ENCODE measurements at regions of chr12 and their contacts with region 1.

Region 1: DNA sequence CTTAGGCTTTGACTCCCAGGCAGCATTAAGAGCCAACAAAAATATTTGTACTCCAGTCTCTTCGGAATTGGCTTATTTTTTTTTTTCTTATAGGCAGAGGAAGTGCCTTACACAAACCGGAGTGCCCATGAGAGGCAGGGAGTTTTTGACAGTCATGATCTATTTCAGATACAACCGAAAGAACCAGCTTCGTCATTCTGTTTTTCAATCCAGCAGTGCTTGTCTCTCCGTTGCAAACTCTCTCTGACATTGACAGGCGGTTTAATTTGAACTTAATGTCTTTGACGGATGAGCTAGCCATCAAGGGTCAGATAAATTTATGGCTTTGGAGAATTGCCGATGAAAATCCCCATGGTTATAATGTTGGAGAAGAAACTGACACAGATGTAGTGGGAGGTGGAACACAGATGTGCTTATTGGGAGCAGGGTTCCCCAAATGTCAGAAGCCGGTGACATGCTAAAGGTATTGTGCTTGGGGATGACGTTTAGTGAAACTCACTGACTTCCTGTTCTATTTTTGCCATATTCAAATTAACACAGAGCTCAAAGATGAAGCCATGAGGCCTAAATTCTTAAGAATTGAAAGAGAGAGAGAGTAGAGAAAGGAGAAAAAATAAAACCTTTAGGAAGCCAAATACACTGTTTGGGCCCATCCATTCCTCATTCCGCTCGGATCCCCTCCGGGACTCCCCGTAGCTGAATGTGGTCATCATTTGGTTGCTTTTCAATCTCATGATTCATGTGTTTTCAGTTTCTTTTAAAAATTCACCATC is 59.7 kb downstream of the PLXNC1 start:
- DNase-seq: peak; percentile 62
- ATAC-seq: peak; percentile 80
- H3K4me3 Mint-ChIP-seq: peak overlapping the region; percentile 68
- H3K27ac Mint-ChIP-seq: peak overlapping the region; percentile 99
- H3K4me1 Mint-ChIP-seq: peaks cover 51% of the 10 kb centered on the region
- H3K27me3 Mint-ChIP-seq: no peaks in the 10 kb centered on the region

Region 2: DNA sequence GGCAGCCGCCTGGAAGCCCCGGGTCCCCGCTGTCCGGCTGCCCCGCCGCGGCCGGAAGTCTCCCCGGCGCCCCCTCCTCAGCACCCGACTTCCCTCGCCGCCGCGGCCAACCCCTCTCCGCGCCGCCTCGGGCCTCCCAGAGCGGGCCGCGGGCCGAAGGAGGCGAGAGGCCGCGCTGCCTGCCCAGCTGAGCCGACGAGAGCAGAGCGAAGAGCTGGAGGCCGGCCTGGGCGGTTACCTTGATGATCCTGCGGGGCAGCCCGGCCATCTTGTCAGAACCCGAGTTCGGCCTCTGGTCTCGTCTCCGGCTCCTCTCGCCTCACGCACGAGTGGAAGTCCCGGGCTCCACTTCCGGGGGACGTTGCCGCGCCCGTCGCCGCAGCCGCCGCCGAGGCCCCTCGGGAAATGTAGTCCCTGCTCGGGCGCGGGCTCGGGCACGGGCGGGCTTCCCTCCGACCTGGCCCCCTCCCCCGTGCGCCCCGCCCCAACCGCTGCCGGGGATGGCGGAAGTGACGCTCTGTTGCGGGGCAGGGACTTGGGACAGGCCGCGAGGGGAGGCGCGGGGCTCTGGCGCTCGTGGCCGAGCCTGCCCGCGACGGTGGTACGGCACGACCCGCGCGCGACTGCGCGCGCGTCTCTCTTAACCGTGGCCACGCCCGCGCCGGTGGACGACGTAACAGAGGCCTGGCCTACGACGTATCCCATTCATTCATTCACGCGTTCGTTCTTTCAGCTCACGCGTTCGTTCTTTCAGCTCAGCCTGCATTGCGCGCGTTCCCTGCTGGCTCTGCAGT is 766.2 kb before region 1 on chr12 and contains the start of gene UBE2N:
- CTCF ChIA-PET with region 1: no interaction called
- POLR2A ChIA-PET with region 1: no interaction called
- intact Hi-C with region 1: loop called in 1 of 2 experiments (anchors 10 kb)
- DNase-seq: peak; percentile 98
- ATAC-seq: peak; percentile 84
- H3K4me3 Mint-ChIP-seq: peak within 1 kb of the TSS; percentile 99
- H3K27ac Mint-ChIP-seq: peak within 1 kb of the TSS; percentile 99
- H3K4me1 Mint-ChIP-seq: peaks cover 48% of the 10 kb centered on the region
- H3K27me3 Mint-ChIP-seq: no peaks in the 10 kb centered on the region
- total RNA-seq, gene UBE2N: 186 to 279 TPM

Region 3: DNA sequence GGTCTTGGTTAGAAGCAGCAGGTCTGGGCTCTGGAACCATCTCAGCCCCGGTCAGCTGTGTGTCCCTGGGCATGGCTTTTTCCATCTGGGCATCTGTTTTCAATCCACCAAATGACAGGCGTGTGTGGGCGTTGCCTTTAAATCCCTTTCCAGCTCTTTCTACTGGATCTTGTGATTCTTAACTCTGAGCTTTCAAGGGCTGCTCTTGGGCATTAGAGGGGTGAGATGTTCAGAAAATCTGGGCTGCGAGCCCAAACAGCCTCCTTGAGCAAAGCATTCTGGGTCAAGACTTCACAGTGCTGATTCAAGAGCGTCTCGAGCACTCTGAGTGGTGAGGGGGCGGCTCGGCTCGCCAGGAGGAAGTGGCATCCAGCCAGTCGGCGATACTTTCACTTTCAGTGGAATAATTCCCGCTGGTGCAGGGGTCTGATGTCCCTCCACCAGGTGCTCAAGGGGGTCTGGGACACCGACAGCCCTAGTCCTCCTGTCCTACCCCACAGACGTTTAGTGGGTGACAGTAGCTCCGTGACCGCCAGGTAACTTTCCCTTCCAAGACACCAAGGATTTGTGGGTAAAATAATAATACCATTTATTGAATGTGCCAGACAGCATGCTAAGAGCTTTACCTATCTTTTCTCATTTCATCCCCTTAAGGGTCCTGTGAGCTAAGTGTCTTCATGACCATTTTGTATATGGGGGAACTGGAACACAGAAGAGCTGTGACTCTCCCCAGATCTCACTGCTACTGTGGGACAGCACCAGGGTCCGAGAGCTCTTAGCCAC is 54.4 kb after region 1 on chr12:
- CTCF ChIA-PET with region 1: interaction called, 8 read pairs
- POLR2A ChIA-PET with region 1: interaction called, 9 read pairs
- intact Hi-C with region 1: loop called (anchors 1 kb)
- DNase-seq: peak; percentile 87
- ATAC-seq: peak; percentile 83
- H3K4me3 Mint-ChIP-seq: peak overlapping the region; percentile 81
- H3K27ac Mint-ChIP-seq: peak overlapping the region; percentile 99
- H3K4me1 Mint-ChIP-seq: peaks cover 44% of the 10 kb centered on the region
- H3K27me3 Mint-ChIP-seq: no peaks in the 10 kb centered on the region

Region 4: GRCh38 chr12:94305130-94305957 is 97.3 kb after region 1 on chr12:
- CTCF ChIA-PET with region 1: interaction called, 8 read pairs
- POLR2A ChIA-PET with region 1: no interaction called
- intact Hi-C with region 1: loop called (anchors 1 kb)
- DNase-seq: peak; percentile 68
- ATAC-seq: peak; percentile 93
- H3K4me3 Mint-ChIP-seq: peak overlapping the region; percentile 5
- H3K27ac Mint-ChIP-seq: peak overlapping the region; percentile 70
- H3K4me1 Mint-ChIP-seq: peaks cover 30% of the 10 kb centered on the region
- H3K27me3 Mint-ChIP-seq: no peaks in the 10 kb centered on the region

Region 5: DNA sequence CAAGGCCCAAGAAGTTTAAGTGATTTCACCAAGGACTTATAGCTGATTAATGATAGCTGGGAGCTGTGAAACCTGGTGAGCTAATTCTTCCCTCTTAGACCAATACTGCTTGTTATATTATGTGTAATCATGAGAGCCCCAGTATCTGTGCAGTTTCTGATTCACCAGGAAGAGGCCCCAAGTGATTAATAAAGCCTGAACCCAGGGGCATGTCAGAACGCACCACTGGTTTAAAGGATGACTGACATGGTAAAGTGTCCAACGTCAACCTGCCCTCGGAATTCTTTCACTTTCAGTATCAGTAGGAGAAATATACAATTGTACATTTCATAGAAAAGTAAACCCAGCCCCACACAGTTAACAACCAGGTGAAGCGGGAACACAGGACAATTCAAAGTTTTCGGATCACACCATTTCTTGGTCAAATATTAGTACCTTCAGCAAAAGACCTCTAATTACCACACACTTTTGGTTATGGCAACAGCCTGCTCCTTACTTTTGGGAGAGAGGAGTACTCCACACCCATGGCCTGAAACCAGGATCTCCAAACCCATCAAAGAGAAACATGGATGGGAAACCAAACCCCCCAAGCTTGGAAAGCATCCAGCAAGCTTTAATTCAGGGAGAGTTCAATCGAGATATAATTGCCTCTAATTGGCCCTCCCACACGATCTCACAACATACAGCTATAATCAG is 413.8 kb after region 1 on chr12:
- CTCF ChIA-PET with region 1: no interaction called
- POLR2A ChIA-PET with region 1: no interaction called
- intact Hi-C with region 1: loop called in 1 of 2 experiments (anchors 2 kb)
- DNase-seq: peak; percentile 66
- ATAC-seq: peak; percentile 95
- H3K4me3 Mint-ChIP-seq: peak overlapping the region; percentile 25
- H3K27ac Mint-ChIP-seq: peak overlapping the region; percentile 67
- H3K4me1 Mint-ChIP-seq: peaks cover 22% of the 10 kb centered on the region
- H3K27me3 Mint-ChIP-seq: no peaks in the 10 kb centered on the region